ENCODE measurements at regions of chr4 and their contacts with region 1.

Region 1: DNA sequence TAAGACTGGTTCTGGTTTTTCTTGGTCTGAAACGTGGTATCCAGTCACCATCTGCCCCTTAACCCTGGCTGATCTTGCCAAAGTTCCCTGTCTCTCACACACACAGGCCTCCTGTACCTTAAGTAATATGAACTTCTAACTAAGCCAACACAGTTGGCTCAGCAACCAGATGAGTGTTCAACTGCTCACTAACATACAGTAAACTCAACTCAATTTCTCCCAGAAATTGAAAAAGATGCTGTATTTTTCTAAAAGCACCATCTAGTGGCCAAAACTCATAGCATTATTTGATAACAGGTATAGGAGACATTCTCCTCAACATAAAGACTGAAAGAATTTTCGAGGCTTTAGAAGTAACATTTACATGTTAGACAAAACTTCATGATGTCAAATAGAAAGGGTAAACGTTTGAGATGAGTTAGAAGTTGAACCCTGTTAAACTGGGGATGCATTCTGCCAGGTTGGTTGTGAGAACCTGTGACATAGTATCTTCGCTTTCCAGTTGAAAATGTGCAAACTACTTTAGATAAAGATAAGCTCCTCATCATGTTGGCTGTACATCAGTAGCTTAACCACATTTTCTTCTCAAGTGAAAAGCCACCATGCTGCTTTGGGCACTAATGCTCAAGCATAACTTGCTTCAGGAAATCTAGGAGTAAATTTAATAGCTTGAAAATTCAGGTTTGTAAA is 31.2 kb downstream of the CCNI start:
- DNase-seq: peak; percentile 16 to 44 (median 20)
- ATAC-seq: peak; percentile 68
- H3K4me3 ChIP-seq: no peak overlapping the region
- H3K27ac ChIP-seq: no peak overlapping the region
- H3K4me1 ChIP-seq: peaks cover 0 to 8% of the 10 kb centered on the region in 2 experiments; a peak in 2 of 5 replicates
- H3K27me3 ChIP-seq: no peaks in the 10 kb centered on the region
- CTCF ChIP-seq: peak; percentile 32 to 67 (median 63); a peak in 4 of 6 replicates
- EP300 ChIP-seq: no peak
- POLR2A ChIP-seq: no peak
- RAD21 ChIP-seq: peak; percentile 55 to 58

Region 2: GRCh38 chr4:76949276-76950051 is 95.1 kb before region 1 on chr4 and contains the start of gene SEPTIN11:
- CTCF ChIA-PET with region 1: no interaction called
- POLR2A ChIA-PET with region 1: interaction called, 4 read pairs
- in situ Hi-C with region 1: no loop called
- intact Hi-C with region 1: loop called (anchors 1 kb)
- DNase-seq: peak; percentile 90 to 95 (median 94)
- ATAC-seq: peak; percentile 84
- H3K4me3 ChIP-seq: peak within 1 kb of the TSS; percentile 80
- H3K27ac ChIP-seq: peak within 1 kb of the TSS; percentile 82
- H3K4me1 ChIP-seq: peaks cover 36 to 46% of the 10 kb centered on the region in 2 experiments
- H3K27me3 ChIP-seq: no peaks in the 10 kb centered on the region
- CTCF ChIP-seq: no peak
- EP300 ChIP-seq: no peak
- POLR2A ChIP-seq: peak; percentile 86
- RAD21 ChIP-seq: no peak
- polyA plus RNA-seq, gene SEPTIN11: 25.7 to 26.7 TPM

Region 3: GRCh38 chr4:77132652-77133312 is 88.2 kb after region 1 on chr4:
- CTCF ChIA-PET with region 1: no interaction called
- POLR2A ChIA-PET with region 1: no interaction called
- in situ Hi-C with region 1: no loop called
- intact Hi-C with region 1: no loop called
- DNase-seq: no peak
- ATAC-seq: no peak
- H3K4me3 ChIP-seq: no peak overlapping the region
- H3K27ac ChIP-seq: no peak overlapping the region
- H3K4me1 ChIP-seq: peaks cover 0 to 1% of the 10 kb centered on the region in 2 experiments; a peak in 1 of 5 replicates
- H3K27me3 ChIP-seq: peaks cover 4 to 10% of the 10 kb centered on the region in 2 experiments; a peak in 4 of 5 replicates
- CTCF ChIP-seq: no peak
- EP300 ChIP-seq: no peak
- POLR2A ChIP-seq: no peak
- RAD21 ChIP-seq: no peak

Region 4: GRCh38 chr4:77308843-77309242 is 264.2 kb after region 1 on chr4:
- CTCF ChIA-PET with region 1: interaction called, 5 read pairs
- POLR2A ChIA-PET with region 1: no interaction called
- in situ Hi-C with region 1: no loop called
- intact Hi-C with region 1: loop called (anchors 10 kb)
- DNase-seq: peak; percentile 43 to 52 (median 46)
- ATAC-seq: peak; percentile 84
- H3K4me3 ChIP-seq: no peak overlapping the region
- H3K27ac ChIP-seq: no peak overlapping the region
- H3K4me1 ChIP-seq: no peaks in the 10 kb centered on the region
- H3K27me3 ChIP-seq: no peaks in the 10 kb centered on the region
- CTCF ChIP-seq: peak; percentile 40 to 65 (median 56); a peak in 5 of 6 replicates
- EP300 ChIP-seq: no peak
- POLR2A ChIP-seq: no peak
- RAD21 ChIP-seq: peak; percentile 20 to 48; a peak in 3 of 4 replicates